Transverse colon (tissue), 4 donors: ENCODE measurements at regions of chr6 and their contacts with region 1.

Region 1: DNA sequence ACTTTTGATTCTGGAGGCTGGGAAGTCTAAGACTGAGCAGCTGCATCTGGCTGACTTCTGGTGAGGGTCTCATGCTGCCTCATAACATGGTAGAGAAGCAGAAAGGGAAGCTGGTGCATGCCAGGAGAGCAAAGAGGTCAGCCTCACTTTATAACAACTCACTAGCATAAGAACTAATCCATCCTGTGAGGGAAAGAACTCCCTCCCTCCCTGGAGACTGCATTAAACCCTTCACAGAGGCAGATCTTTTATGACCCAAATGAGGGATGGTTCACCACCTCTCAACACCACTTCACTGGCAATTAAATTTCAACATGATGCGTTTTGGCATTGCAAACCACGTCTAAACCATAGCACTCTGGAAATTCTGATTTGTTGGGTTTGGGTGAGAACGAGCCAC is 33.9 kb downstream of the STXBP5 start:
- DNase-seq: no peak
- H3K4me3 ChIP-seq: no peak overlapping the region
- H3K27ac ChIP-seq: no peak overlapping the region
- H3K4me1 ChIP-seq: no peaks in the 10 kb centered on the region
- H3K27me3 ChIP-seq: no peaks in the 10 kb centered on the region
- CTCF ChIP-seq: no peak
- EP300 ChIP-seq: no peak
- POLR2A ChIP-seq: no peak

Region 2: GRCh38 chr6:147022041-147022440 is 216.1 kb before region 1 on chr6:
- in situ Hi-C with region 1: no loop called
- intact Hi-C with region 1: no loop called
- DNase-seq: no peak
- H3K4me3 ChIP-seq: no peak overlapping the region
- H3K27ac ChIP-seq: no peak overlapping the region
- H3K4me1 ChIP-seq: no peaks in the 10 kb centered on the region
- H3K27me3 ChIP-seq: no peaks in the 10 kb centered on the region
- CTCF ChIP-seq: no peak
- EP300 ChIP-seq: no peak
- POLR2A ChIP-seq: no peak

Region 3: DNA sequence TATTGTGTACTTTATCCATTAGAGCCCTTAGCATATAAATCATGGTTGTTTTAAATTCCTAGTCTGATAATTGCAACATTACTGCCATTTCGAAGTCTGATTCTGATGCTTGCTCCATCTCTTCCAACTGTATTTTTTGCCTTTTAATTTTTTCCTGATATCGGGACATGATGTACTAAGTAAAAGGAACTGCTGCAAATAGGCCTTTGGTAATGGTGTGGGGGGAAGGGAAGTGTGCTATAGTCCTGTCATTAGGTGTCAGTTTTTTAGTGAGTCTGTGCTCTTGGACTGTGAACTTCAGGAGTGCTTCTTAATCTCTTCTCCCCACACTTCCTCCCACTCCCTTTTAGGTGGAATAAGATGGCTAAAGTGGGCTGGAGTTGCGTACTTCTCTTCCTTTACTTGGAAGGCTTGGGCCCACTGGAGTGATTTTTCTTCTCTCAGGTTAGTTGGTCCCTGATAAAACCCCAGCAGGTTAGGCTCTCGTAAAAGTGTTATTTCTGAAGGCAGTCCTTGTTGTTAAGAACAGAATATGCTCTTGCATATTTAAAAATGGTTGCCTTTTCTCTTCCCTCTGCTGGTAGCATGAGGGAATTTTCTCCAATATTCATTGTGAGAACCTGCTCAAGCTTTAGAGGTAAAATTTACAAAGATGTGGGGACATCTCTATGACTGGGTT is 15.9 kb before region 1 on chr6:
- in situ Hi-C with region 1: no loop called
- intact Hi-C with region 1: no loop called
- DNase-seq: no peak
- H3K4me3 ChIP-seq: no peak overlapping the region
- H3K27ac ChIP-seq: peak overlapping the region; percentile 8 to 56 (median 22)
- H3K4me1 ChIP-seq: peaks cover 0 to 62% (median 30%) of the 10 kb centered on the region in 4 donors
- H3K27me3 ChIP-seq: no peaks in the 10 kb centered on the region
- CTCF ChIP-seq: peak; percentile 38 to 62 (median 52)
- EP300 ChIP-seq: no peak
- POLR2A ChIP-seq: no peak

Region 4: DNA sequence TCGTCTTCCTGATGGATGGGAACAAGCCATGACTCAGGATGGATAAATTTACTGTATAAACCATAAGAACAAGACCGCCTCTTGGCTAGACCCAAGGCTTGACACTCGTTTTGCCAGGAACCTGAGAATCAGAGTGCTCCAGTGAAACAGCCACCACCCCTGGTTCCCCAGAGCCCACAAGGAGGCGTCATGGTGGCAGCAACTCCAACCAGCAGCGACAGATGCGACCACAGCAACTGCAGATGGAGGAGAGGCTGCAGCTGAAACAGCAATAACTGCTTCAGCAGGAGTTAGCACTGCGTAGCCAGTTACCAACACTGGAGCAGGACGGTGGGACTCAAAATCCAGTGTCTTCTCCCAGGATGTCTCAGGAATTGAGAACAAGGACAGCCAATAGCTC is 169.4 kb after region 1 on chr6:
- in situ Hi-C with region 1: no loop called
- intact Hi-C with region 1: no loop called
- DNase-seq: no peak
- H3K4me3 ChIP-seq: no peak overlapping the region
- H3K27ac ChIP-seq: no peak overlapping the region
- H3K4me1 ChIP-seq: no peaks in the 10 kb centered on the region
- H3K27me3 ChIP-seq: no peaks in the 10 kb centered on the region
- CTCF ChIP-seq: no peak
- EP300 ChIP-seq: no peak
- POLR2A ChIP-seq: no peak

Region 5: GRCh38 chr6:147909640-147910039 is 671.5 kb after region 1 on chr6:
- in situ Hi-C with region 1: no loop called
- intact Hi-C with region 1: loop called (anchors 10 kb)
- DNase-seq: no peak
- H3K4me3 ChIP-seq: no peak overlapping the region
- H3K27ac ChIP-seq: no peak overlapping the region
- H3K4me1 ChIP-seq: no peaks in the 10 kb centered on the region
- H3K27me3 ChIP-seq: no peaks in the 10 kb centered on the region
- CTCF ChIP-seq: no peak
- EP300 ChIP-seq: no peak
- POLR2A ChIP-seq: no peak